ENCODE measurements at regions of chr3 and their contacts with region 1.

Region 1: GRCh38 chr3:50495609-50496423 is 7.6 kb downstream of the CACNA2D2 start:
- DNase-seq: no peak

Region 2: DNA sequence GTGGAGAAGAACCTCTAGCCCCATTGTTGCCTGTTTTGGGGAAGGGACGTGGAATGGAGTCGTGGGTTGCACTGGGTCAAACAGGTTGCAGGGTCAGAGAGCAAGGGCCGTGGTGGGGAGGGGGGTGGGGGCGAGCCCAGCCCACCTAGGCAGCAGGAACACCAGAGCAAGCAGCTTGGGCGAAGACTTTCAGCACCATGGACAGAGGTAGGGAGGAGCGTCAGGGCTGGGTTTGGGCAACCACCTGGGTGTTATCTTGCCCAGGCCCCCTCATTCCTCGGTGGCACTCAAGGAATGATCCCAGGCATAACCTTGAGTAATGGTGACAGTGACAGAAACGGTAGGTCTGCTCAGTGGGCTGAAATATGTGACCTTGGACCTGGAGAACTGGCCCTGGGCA is 90.6 kb before region 1 on chr3:
- intact Hi-C with region 1: loop called in 1 of 2 experiments (anchors 1 kb)
- DNase-seq: no peak